GM12878 (cell line): ENCODE measurements at regions of chr18 and their contacts with region 1.

Region 1: GRCh38 chr18:58051765-58052460 is 7.9 kb downstream of the NEDD4L start:
- DNase-seq: no peak
- ATAC-seq: peak; percentile 91
- H3K4me3 ChIP-seq: no peak overlapping the region
- H3K27ac ChIP-seq: no peak overlapping the region
- H3K4me1 ChIP-seq: no peaks in the 10 kb centered on the region
- H3K27me3 ChIP-seq: no peaks in the 10 kb centered on the region
- CTCF ChIP-seq: peak; percentile 38 to 62 (median 41); a peak in 5 of 6 replicates
- EP300 ChIP-seq: no peak
- POLR2A ChIP-seq: no peak
- RAD21 ChIP-seq: peak; percentile 45; the same call in 1 of the 2 replicates

Region 2: DNA sequence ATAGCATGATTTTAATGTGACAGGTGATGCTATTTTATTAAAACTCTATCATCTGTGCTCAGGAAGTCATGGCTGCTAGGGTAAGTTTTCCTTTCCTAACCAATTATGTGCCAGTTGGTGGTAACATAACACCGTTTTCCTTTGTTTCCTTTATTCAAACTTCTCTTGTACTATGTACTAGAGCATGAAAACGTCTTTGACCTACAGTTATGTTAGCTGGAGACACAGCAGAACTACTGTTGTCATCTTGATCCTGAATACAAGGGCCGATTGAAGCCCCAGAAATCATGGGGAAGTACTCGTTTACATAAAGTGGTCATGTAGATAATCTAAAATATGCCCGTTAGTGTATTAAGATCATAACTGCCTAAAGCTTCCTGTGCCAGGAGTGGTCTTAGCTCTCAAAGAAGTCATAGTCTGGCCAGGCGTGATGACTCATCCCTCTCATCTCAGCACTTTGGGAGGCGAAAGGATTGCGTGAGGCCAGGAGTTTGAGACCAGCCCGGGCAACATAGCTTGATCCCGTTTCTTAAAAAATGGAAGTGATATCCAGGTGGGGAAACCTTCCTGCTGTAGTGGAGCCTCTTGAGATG is 12.6 kb after region 1 on chr18:
- CTCF ChIA-PET with region 1: interaction called, 12 read pairs
- POLR2A ChIA-PET with region 1: interaction called, 6 read pairs
- RAD21 ChIA-PET with region 1: interaction called, 6 read pairs
- SMC1A ChIA-PET with region 1: interaction called, 31 read pairs
- in situ Hi-C with region 1: no loop called
- intact Hi-C with region 1: no loop called
- DNase-seq: no peak
- ATAC-seq: no peak
- H3K4me3 ChIP-seq: no peak overlapping the region
- H3K27ac ChIP-seq: no peak overlapping the region
- H3K4me1 ChIP-seq: no peaks in the 10 kb centered on the region
- H3K27me3 ChIP-seq: no peaks in the 10 kb centered on the region
- CTCF ChIP-seq: no peak
- EP300 ChIP-seq: no peak
- POLR2A ChIP-seq: no peak
- RAD21 ChIP-seq: no peak

Region 3: GRCh38 chr18:58091099-58091611 is 39.2 kb after region 1 on chr18:
- CTCF ChIA-PET with region 1: interaction called, 15 read pairs
- POLR2A ChIA-PET with region 1: interaction called, 5 read pairs
- RAD21 ChIA-PET with region 1: interaction called, 10 read pairs
- SMC1A ChIA-PET with region 1: interaction called, 12 read pairs
- in situ Hi-C with region 1: no loop called
- intact Hi-C with region 1: no loop called
- DNase-seq: peak; percentile 72
- ATAC-seq: peak; percentile 97
- H3K4me3 ChIP-seq: no peak overlapping the region
- H3K27ac ChIP-seq: peak overlapping the region; percentile 52
- H3K4me1 ChIP-seq: peaks cover 14% of the 10 kb centered on the region
- H3K27me3 ChIP-seq: no peaks in the 10 kb centered on the region
- CTCF ChIP-seq: no peak
- EP300 ChIP-seq: no peak
- POLR2A ChIP-seq: no peak
- RAD21 ChIP-seq: no peak

Region 4: DNA sequence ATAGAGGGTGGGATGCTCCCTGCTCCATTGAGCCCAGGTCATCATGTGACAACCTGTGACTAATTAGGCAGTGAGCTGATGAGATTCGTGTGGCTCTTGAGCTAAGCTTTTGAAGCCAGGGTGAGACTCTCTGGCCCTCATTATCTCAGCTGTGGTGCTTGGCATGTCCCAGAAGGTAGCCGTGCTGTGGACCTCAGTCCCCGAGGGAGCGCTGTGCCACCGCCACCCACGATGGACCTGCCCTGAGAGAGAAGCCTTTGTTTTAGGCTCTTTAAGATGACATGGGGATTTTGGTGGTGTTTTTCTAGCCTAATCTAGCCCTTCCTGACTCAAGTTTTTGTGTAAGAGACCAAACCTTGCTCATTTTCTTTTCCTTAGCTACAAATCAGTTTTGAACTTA is 58.5 kb after region 1 on chr18:
- CTCF ChIA-PET with region 1: interaction called, 113 read pairs
- POLR2A ChIA-PET with region 1: interaction called, 7 read pairs
- RAD21 ChIA-PET with region 1: interaction called, 21 read pairs
- SMC1A ChIA-PET with region 1: interaction called, 55 read pairs
- in situ Hi-C with region 1: no loop called
- intact Hi-C with region 1: no loop called
- DNase-seq: peak; percentile 61
- ATAC-seq: peak; percentile 85
- H3K4me3 ChIP-seq: no peak overlapping the region
- H3K27ac ChIP-seq: peak overlapping the region; percentile 9; the same call in 1 of the 2 replicates
- H3K4me1 ChIP-seq: peaks cover 12% of the 10 kb centered on the region
- H3K27me3 ChIP-seq: no peaks in the 10 kb centered on the region
- CTCF ChIP-seq: no peak
- EP300 ChIP-seq: 0 out of 4 replicates have a peak, but pooled peaks of 1 of the 2 experiments have one; percentile 11
- POLR2A ChIP-seq: no peak
- RAD21 ChIP-seq: no peak

Region 5: GRCh38 chr18:58128381-58129374 is 76.8 kb after region 1 on chr18:
- CTCF ChIA-PET with region 1: interaction called, 117 read pairs
- POLR2A ChIA-PET with region 1: no interaction called
- RAD21 ChIA-PET with region 1: interaction called, 7 read pairs
- SMC1A ChIA-PET with region 1: interaction called, 5 read pairs
- in situ Hi-C with region 1: loop called (anchors 5 kb)
- intact Hi-C with region 1: no loop called
- DNase-seq: no peak
- ATAC-seq: no peak
- H3K4me3 ChIP-seq: no peak overlapping the region
- H3K27ac ChIP-seq: no peak overlapping the region
- H3K4me1 ChIP-seq: no peaks in the 10 kb centered on the region
- H3K27me3 ChIP-seq: no peaks in the 10 kb centered on the region
- CTCF ChIP-seq: no peak
- EP300 ChIP-seq: no peak
- POLR2A ChIP-seq: no peak
- RAD21 ChIP-seq: no peak

Region 6: DNA sequence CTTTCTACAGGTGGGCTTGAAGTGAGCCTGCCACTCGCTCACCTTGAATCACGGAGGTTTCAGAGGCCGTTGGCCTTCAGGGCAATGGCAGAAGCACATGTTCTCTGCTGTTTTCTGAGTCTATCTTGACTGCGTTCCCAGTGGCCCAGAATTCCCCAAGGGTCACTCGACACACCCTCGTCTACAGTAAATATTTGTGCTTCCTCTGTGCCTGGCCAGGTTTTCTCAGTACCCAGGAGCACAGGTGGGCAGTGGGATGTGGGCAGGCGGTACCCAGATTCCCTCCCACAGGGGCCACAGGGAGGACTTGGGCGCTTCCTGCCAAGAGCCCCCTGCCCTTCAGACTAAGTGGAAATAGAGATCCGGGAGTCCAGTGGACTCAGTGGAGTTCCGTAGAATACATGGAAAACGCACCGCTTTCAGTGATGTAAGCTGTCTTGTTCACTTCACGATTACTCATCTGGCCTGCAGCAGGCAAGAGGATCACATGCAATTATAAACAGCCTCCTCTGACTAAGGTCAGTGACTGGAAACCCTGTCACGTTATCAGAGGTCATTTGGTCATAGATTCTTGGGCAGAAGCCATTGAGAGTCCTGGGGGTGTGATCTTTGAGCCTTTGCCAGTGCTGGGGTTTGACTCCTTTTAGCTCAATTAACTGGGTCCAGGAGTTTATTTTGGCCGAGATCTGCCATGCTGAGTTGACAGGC is 172.0 kb after region 1 on chr18:
- CTCF ChIA-PET with region 1: no interaction called
- POLR2A ChIA-PET with region 1: no interaction called
- RAD21 ChIA-PET with region 1: no interaction called
- SMC1A ChIA-PET with region 1: no interaction called
- in situ Hi-C with region 1: no loop called
- intact Hi-C with region 1: no loop called
- DNase-seq: no peak
- ATAC-seq: peak; percentile 47
- H3K4me3 ChIP-seq: no peak overlapping the region
- H3K27ac ChIP-seq: no peak overlapping the region
- H3K4me1 ChIP-seq: peaks cover 13% of the 10 kb centered on the region
- H3K27me3 ChIP-seq: no peaks in the 10 kb centered on the region
- CTCF ChIP-seq: no peak
- EP300 ChIP-seq: no peak
- POLR2A ChIP-seq: no peak
- RAD21 ChIP-seq: no peak